ENCODE measurements at regions of chr1 and their contacts with region 1.

Region 1: DNA sequence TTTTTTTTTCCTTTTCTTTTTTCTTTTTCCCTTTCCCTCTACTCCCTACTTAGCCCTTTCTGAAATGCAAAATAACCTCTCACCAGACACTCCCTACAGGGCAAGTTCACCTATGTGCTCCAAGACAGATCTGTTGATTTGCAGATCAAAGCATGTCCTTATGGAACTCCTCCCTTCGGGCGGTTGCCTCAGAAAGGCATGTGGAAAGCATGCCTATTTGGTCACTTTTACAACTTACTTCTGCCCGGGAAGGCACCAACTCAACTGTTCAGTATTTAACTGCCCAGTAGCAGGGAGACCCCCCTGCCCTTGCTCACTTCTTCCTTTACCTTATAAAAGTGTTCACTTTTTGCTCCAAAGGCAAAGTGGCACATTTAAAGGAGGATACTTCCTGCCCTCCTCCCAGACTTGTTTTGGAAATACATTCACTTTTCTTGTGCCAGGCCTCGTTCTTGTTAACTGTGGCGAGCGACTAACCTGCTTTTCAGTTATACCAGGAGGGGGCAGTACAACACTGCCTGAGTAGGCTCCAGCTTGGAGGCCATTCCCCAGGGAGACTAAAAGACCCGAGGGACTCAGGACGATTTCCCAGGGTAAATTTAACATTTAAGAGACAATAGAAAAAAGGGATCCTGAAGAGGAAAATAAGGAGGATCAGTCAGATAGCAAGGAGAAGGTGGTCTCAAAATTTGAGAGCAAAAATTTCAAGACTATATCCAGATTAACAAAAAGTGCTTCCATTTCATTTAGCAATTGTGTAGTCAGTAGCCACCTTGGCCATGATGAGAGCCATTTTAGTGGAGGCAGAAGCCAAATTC is 12.3 kb upstream of the SLAMF7 start:
- DNase-seq: no peak
- H3K4me3 Mint-ChIP-seq: no peak overlapping the region
- H3K27ac Mint-ChIP-seq: no peak overlapping the region
- H3K4me1 Mint-ChIP-seq: peaks cover 18% of the 10 kb centered on the region
- H3K27me3 Mint-ChIP-seq: no peaks in the 10 kb centered on the region

Region 2: DNA sequence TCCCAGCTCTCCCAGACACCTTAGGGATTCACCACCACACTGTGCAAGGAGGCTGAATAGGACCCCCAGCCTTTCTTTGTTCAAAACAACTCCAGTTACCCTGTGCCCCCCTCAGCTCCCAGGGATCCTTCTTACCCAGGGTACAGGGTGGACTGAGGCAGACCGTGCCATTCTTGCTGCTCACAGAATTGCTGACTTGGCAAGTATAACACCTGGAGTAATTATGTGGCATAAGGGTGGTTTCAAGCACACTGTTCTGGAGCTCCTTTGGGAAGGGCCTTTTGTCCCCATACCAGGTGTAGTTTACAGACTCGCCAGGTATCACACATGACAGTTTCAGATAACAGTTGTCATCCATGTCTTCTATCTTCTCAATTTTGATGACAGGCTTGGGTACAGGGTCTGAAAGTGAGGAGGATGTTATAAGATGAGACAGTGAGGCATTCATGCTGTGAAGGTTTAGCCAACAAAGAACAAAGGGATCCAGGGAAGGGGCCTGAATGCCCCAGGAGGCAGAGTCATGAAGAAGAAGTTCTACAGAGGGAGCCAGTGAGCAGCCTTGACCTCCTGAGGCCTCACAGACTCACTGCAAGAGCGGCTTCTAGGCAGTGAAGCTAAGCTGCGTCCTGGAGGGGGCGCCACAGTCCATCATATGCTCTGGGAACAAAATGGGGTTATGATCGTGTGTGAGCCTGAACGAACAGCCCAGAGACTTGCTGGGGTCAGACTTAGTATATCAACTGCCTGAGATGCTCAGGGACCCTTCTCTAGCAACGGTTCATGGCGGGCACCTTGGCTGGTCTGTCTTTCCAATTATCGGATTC is 45.4 kb before region 1 on chr1:
- intact Hi-C with region 1: loop called (anchors 1 kb)
- DNase-seq: peak; percentile 78
- H3K4me3 Mint-ChIP-seq: peak overlapping the region; percentile 60
- H3K27ac Mint-ChIP-seq: peak overlapping the region; percentile 85
- H3K4me1 Mint-ChIP-seq: peaks cover 81% of the 10 kb centered on the region
- H3K27me3 Mint-ChIP-seq: no peaks in the 10 kb centered on the region

Region 3: GRCh38 chr1:160748181-160748877 is 21.6 kb after region 1 on chr1:
- intact Hi-C with region 1: loop called (anchors 2 kb)
- DNase-seq: no peak
- H3K4me3 Mint-ChIP-seq: peak overlapping the region; percentile 3
- H3K27ac Mint-ChIP-seq: peak overlapping the region; percentile 61
- H3K4me1 Mint-ChIP-seq: peaks cover 92% of the 10 kb centered on the region
- H3K27me3 Mint-ChIP-seq: no peaks in the 10 kb centered on the region

Region 4: DNA sequence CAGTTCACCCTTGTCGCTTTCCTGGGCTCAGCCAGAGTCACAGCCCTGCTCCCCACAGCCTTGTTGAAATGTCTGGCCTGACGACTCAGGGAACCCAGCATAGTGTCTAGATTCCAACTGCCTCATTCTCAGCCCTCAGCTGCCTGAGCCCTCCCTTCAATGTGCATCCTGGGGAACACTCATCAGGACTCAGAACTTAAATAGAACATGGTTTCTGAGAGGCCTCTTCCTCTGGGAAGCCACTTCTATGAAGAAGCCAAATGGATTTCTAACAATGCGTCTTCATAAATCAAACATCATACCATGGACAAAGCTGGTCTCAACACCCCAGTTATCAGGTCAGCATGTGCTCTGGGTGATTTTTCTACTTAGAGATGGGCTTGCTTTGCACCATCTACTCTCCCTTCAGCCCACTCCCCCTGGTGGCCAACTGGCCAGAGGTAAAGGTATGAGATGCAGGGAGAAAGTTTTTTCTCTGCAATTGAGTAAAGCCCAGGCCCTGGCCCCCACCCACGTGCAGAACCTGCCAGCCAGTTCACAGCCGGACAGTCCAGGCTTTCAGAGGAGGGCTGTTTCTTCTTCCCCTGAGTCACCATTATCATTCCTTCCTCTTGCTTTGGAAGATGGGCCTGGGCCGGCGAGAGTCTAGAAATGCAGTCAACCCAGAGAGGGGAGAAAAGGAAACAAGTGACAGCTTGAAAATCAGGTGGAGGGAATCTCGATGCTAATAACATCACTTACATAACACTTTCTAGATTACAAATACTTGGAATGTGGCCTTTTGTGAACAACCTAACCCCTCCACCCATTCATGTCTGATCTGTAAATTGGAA is 103.8 kb after region 1 on chr1:
- intact Hi-C with region 1: loop called (anchors 1 kb)
- DNase-seq: peak; percentile 65
- H3K4me3 Mint-ChIP-seq: no peak overlapping the region
- H3K27ac Mint-ChIP-seq: no peak overlapping the region
- H3K4me1 Mint-ChIP-seq: peaks cover 26% of the 10 kb centered on the region
- H3K27me3 Mint-ChIP-seq: peaks cover 3% of the 10 kb centered on the region

Region 5: DNA sequence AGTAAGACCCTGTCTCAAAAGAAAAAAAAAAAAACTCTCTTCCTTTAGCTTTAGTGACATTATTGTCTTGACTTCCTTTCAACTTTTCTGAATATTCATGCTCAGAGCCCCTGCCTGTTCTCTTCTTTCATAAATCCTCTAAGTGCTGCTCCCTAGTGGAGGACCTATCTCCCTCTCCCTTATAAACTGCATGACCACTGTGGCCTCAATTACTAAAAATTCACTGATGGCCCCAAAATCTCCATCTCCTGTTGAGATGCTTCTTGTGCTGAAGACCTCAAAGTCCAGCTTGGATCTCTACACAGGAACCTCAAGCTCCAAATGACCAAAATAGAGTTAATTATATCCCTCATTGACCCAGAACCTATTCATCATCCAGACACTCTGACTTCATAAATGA is 150.5 kb after region 1 on chr1:
- intact Hi-C with region 1: loop called (anchors 1 kb)
- DNase-seq: no peak
- H3K4me3 Mint-ChIP-seq: no peak overlapping the region
- H3K27ac Mint-ChIP-seq: no peak overlapping the region
- H3K4me1 Mint-ChIP-seq: peaks cover 16% of the 10 kb centered on the region
- H3K27me3 Mint-ChIP-seq: no peaks in the 10 kb centered on the region

Region 6: GRCh38 chr1:160951443-160952128 is 224.9 kb after region 1 on chr1:
- intact Hi-C with region 1: loop called (anchors 1 kb)
- DNase-seq: peak; percentile 52
- H3K4me3 Mint-ChIP-seq: no peak overlapping the region
- H3K27ac Mint-ChIP-seq: no peak overlapping the region
- H3K4me1 Mint-ChIP-seq: peaks cover 11% of the 10 kb centered on the region
- H3K27me3 Mint-ChIP-seq: peaks cover 6% of the 10 kb centered on the region